Posterior vena cava (tissue), 2 donors: ENCODE measurements at regions of chr1 and their contacts with region 1.

Region 1: GRCh38 chr1:42392967-42393848 is 12.6 kb downstream of the RIMKLA start:
- DNase-seq: no peak

Region 2: GRCh38 chr1:42290130-42290529 is 103.1 kb before region 1 on chr1:
- intact Hi-C with region 1: no loop called
- DNase-seq: no peak

Region 3: DNA sequence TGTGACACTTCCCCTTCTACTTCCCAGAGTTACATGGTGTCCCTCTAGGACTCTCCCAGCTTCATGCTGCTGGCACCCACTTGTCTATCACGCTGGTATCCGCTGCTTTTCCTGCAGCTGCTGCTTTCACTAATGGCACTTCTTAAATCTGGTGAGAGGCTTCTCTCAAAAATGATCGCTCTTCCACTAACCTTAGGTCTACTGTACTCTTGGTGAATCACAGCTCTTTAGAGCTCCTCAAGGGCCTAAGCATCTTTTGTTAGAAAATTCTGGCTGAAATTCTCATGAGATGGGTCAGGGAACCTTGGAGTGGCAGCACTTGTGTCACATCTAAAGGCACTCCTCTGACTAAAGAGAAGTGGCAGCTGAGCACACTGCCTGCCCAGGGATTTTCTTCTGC is 30.5 kb after region 1 on chr1:
- intact Hi-C with region 1: loop called in 1 of 2 experiments (anchors 2 kb)
- DNase-seq: no peak